Activated CD8-positive, alpha-beta memory T cell treated with anti-CD3 and anti-CD28 coated beads, Interleukin-2, amount 10 ng/mL, durations not matched to agents 7 days and 5 days (primary cell): ENCODE measurements at regions of chr20 and their contacts with region 1.

Region 1: DNA sequence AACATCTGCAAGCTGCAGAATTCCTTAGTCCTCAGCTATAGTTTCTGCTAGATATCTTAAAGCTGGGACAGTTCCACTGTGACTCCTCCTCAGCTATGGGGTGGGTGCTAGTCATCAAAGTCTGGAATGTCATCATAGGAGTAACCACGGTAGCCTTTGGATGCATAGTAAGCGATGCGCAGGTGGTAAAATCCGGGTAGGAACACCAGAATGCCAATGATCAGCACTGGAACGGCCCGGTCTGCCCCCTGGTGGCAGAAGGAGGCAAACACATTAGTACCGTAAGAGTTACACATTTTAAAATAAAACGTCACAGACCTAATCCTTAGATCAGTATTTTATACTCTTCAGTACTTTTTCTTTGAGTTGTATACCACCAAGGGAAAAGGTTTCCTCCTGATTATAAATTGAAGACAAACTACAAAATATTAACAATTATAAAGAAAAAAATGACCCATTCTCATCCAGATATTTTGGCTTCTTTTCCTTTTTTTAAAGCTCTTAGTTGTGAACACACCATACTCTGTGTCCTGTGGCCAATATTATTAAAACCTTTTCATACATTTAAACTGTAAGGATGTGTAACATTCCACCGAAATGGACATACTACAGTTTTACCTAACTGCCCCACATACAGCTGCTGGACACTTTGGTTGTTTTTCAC is 18.9 kb downstream of the PCNA start:
- DNase-seq: peak; percentile 78
- ATAC-seq: peak; percentile 81
- H3K4me3 Mint-ChIP-seq: no peak overlapping the region
- H3K27ac Mint-ChIP-seq: peak overlapping the region; percentile 62
- H3K4me1 Mint-ChIP-seq: peaks cover 10% of the 10 kb centered on the region
- H3K27me3 Mint-ChIP-seq: no peaks in the 10 kb centered on the region

Region 2: DNA sequence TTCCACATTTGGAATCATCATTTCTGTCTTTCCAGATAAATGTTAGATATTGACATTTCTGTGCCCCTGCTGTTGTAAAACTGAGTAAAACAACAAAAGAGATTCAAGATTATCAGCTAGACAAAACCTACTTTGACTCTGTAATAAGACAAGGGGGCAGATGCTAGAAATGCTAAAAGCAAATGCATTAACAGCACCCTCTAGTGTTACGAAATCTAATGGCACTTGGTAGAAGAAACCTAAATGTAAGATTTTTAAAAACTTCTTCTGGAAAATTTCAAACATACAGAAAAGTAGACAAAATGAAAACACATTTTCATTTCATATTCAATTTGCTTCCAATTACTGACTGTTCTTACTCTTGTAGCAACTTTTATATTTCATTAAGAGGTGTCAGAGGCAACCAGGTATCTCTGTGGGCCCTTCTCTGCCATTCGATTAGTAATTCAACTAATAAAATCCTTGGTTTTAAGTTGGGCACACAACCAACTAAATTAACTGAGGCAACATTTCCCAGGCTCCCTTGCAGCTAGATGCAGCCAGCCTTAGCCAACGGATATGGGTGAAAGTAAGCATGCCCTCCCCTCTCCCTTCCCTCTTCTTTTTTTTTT is 144.5 kb before region 1 on chr20:
- CTCF ChIA-PET with region 1: interaction called, 16 read pairs
- DNase-seq: no peak
- ATAC-seq: peak; percentile 81
- H3K4me3 Mint-ChIP-seq: no peak overlapping the region
- H3K27ac Mint-ChIP-seq: no peak overlapping the region
- H3K4me1 Mint-ChIP-seq: peaks cover 8% of the 10 kb centered on the region
- H3K27me3 Mint-ChIP-seq: no peaks in the 10 kb centered on the region

Region 3: GRCh38 chr20:4966826-4967751 is 133.7 kb before region 1 on chr20:
- CTCF ChIA-PET with region 1: interaction called, 14 read pairs
- DNase-seq: no peak
- ATAC-seq: no peak
- H3K4me3 Mint-ChIP-seq: no peak overlapping the region
- H3K27ac Mint-ChIP-seq: no peak overlapping the region
- H3K4me1 Mint-ChIP-seq: peaks cover 7% of the 10 kb centered on the region
- H3K27me3 Mint-ChIP-seq: no peaks in the 10 kb centered on the region

Region 4: DNA sequence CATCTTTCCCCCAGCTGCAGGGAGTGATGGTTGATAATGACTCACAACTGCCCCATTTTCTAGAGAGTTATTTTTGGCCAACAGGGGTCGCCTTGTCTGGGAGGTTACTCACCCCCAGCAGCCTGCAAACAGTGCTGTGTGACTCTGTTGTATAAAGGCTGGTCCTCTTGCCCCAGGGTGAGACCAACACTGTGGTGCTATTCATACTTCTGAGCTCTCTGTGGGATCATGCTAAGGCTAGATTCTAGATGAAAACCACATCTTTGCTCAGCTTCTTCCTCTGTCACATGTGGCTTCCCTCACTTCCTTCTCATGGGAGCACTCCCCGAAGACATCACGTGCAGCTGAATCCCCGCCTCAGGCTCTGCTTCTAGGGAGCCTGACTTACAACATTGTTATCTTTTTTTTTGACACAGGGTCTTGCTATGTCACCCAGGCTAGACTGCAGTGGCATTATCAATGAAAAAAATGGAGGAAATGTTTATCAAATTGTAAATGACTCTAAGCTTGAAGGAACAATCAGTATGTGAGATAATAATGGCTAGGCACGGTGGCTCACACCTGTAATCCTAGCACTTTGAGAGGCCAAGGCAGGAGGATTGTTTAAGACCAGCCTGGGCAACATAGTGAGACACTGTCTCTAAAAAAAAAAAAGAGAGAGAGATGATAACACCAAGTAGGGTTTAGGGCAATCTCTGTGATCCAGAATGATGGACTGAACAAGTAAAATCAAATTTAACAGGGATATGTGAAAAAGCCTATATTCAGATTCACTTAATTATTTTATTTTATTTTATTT is 43.8 kb before region 1 on chr20:
- CTCF ChIA-PET with region 1: interaction called, 109 read pairs
- DNase-seq: peak; percentile 89
- ATAC-seq: peak; percentile 99
- H3K4me3 Mint-ChIP-seq: no peak overlapping the region
- H3K27ac Mint-ChIP-seq: peak overlapping the region; percentile 86
- H3K4me1 Mint-ChIP-seq: peaks cover 30% of the 10 kb centered on the region
- H3K27me3 Mint-ChIP-seq: no peaks in the 10 kb centered on the region

Region 5: GRCh38 chr20:5090191-5090590 is 10.6 kb before region 1 on chr20:
- CTCF ChIA-PET with region 1: interaction called, 12 read pairs
- DNase-seq: no peak
- ATAC-seq: peak; percentile 61
- H3K4me3 Mint-ChIP-seq: no peak overlapping the region
- H3K27ac Mint-ChIP-seq: peak overlapping the region; percentile 75
- H3K4me1 Mint-ChIP-seq: peaks cover 13% of the 10 kb centered on the region
- H3K27me3 Mint-ChIP-seq: no peaks in the 10 kb centered on the region